ENCODE measurements at regions of chr9 and their contacts with region 1.

Region 1: GRCh38 chr9:109411798-109412352 is 86.2 kb downstream of the PTPN3 start:
- DNase-seq: peak; percentile 79
- H3K4me3 Mint-ChIP-seq: peak overlapping the region; percentile 6
- H3K27ac Mint-ChIP-seq: peak overlapping the region; percentile 90
- H3K4me1 Mint-ChIP-seq: peaks cover 46% of the 10 kb centered on the region
- H3K27me3 Mint-ChIP-seq: no peaks in the 10 kb centered on the region

Region 2: DNA sequence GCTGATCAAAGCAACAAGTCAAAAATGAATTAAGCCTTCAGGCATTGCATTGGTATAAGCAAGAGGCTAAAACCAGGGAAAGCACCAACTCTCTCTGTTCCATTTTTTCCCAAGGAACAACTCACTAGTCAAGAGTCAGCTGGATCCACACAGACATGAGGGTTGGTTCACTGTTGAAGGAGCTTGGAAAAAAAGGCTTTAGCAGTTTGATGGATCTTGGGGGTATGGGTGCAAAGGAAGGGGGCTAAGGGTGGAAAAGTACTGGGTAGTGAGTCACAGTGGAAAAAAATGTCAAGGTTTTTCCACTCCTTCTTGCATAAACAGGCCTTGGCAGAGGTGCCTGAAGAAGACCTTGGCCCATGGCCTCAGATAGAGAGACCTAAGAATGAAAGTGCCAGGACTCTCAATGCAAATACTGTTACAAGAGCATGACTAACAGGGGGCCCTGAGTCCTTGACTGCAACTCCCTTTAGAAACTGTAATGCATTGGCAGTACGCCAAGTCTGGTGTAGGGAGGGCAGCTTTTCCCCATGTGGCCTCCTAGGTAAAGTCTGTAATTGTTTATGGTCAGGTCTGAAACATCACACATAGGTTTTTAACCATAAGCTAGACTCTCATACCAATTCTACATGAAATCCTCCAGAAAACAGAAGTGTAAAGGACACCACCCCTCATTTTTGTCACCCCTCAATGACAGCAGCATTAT is 526.1 kb before region 1 on chr9:
- intact Hi-C with region 1: loop called (anchors 10 kb)
- DNase-seq: peak; percentile 59
- H3K4me3 Mint-ChIP-seq: peak overlapping the region; percentile 54
- H3K27ac Mint-ChIP-seq: peak overlapping the region; percentile 89
- H3K4me1 Mint-ChIP-seq: peaks cover 11% of the 10 kb centered on the region
- H3K27me3 Mint-ChIP-seq: no peaks in the 10 kb centered on the region

Region 3: GRCh38 chr9:109119439-109120203 is 292.3 kb before region 1 on chr9 and contains the start of gene TMEM245:
- intact Hi-C with region 1: loop called (anchors 1 kb)
- DNase-seq: peak; percentile 98
- H3K4me3 Mint-ChIP-seq: peak within 1 kb of the TSS; percentile 90
- H3K27ac Mint-ChIP-seq: peak within 1 kb of the TSS; percentile 94
- H3K4me1 Mint-ChIP-seq: peaks cover 38% of the 10 kb centered on the region
- H3K27me3 Mint-ChIP-seq: no peaks in the 10 kb centered on the region
- total RNA-seq, gene TMEM245: 26.7 and 27.0 TPM in 2 replicates

Region 4: DNA sequence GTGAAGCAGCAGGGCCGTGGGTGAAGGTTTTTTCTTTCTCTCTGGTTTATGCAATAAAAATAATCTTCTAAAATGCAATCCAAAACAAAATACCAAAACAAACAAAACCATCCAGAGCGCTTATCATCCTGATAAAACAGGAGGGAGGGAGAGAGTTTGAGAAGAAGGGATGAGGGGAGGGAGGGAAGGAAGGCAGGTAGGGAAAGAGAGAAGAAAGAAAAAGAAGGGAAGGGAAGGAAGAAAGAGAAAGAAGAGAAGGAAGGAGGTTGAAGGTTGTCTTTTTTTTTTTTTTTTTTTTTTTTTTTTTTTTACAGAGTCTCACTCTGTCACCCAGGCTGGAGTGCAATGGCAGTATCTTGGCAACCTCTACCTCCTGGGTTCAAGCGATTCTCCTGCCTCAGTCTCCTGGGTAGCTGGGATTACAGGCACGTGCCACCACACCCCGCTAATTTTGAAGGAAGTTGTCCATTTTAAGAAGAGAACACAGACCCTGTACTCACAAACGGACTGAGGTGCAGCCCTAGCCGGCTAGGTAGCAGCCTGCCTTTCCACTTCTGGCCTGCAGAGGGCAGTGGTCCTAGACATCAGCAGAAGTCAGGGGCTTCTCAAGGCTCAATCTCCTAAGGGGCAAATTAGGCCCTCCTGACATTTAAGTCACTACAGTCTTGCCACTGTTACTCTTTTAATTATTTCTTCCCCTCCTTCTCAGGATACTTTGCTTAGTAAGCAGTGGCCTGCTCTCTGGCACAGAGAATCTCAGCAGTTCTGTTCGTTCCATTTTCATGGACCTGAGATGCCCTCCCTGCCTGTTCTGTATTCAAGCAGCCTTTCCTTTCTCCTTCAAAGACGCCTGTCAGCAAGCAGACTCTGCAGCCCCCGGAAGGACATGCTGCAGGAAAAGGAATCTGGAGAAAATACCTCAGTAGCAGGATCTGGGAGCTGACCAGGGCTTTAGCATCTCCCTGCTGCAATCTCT is 167.4 kb before region 1 on chr9:
- intact Hi-C with region 1: loop called (anchors 2 kb)
- DNase-seq: peak; percentile 91
- H3K4me3 Mint-ChIP-seq: no peak overlapping the region
- H3K27ac Mint-ChIP-seq: no peak overlapping the region
- H3K4me1 Mint-ChIP-seq: peaks cover 4% of the 10 kb centered on the region
- H3K27me3 Mint-ChIP-seq: peaks cover 35% of the 10 kb centered on the region

Region 5: GRCh38 chr9:109440797-109441287 is 29.0 kb after region 1 on chr9:
- intact Hi-C with region 1: loop called (anchors 2 kb)
- DNase-seq: peak; percentile 92
- H3K4me3 Mint-ChIP-seq: no peak overlapping the region
- H3K27ac Mint-ChIP-seq: peak overlapping the region; percentile 83
- H3K4me1 Mint-ChIP-seq: peaks cover 18% of the 10 kb centered on the region
- H3K27me3 Mint-ChIP-seq: peaks cover 22% of the 10 kb centered on the region

Measured in activated CD4-positive, alpha-beta T cell treated with anti-CD3 and anti-CD28 coated beads, Interleukin-2, amount 10 ng/mL, durations not matched to agents 24 days and 14 days (primary cell).